ENCODE measurements at regions of chr10 and their contacts with region 1.

Region 1: DNA sequence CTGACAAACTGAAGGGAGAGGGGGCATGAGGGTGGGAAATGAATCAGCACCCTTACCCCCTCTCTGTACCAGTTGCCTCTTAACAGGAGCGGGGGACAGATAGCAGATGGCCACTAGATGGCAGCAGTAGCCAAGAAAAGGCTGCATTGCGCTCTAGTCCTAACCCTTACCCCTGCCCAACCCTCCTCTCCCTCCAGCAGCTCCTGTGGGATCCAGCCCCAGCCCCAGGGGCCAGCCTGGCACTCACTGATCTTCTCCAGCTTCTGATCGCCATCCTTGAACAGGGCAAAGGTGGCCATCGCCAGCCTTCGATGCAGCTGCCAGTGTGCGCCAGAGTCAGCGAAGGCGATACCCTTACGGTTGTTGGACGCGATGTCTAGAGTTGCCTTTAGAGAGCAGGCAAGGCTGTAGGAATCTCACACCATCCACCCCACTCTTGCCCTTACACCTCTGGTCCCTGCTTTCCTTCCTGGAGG is 2.2 kb downstream of the CYP17A1 start:
- DNase-seq: peak; percentile 64 to 88
- ATAC-seq: peak; percentile 86 to 99 (median 98)
- H3K4me3 ChIP-seq: no peak overlapping the region
- H3K4me3 Mint-ChIP-seq: no peak overlapping the region
- H3K27ac ChIP-seq: no peak overlapping the region
- H3K27ac Mint-ChIP-seq: no peak overlapping the region
- H3K4me1 ChIP-seq: peaks cover 6% of the 10 kb centered on the region
- H3K4me1 Mint-ChIP-seq: peaks cover 0 to 7% of the 10 kb centered on the region in 2 donors
- H3K27me3 ChIP-seq: peaks cover 5% of the 10 kb centered on the region
- H3K27me3 Mint-ChIP-seq: peaks cover 3 to 25% of the 10 kb centered on the region in 2 donors
- CTCF ChIP-seq: peak; percentile 86

Region 2: GRCh38 chr10:102853944-102854694 is 19.1 kb after region 1 on chr10 and contains the start of gene BORCS7:
- intact Hi-C with region 1: no loop called
- DNase-seq: peak; percentile 77 to 94
- ATAC-seq: peak; percentile 98 to 100 (median 99)
- H3K4me3 ChIP-seq: peak within 1 kb of the TSS; percentile 100
- H3K4me3 Mint-ChIP-seq: peak within 1 kb of the TSS; percentile 99
- H3K27ac ChIP-seq: peak within 1 kb of the TSS; percentile 98
- H3K27ac Mint-ChIP-seq: peak within 1 kb of the TSS; percentile 94 to 98
- H3K4me1 ChIP-seq: peaks cover 5% of the 10 kb centered on the region
- H3K4me1 Mint-ChIP-seq: peaks cover 16 to 19% of the 10 kb centered on the region in 2 donors
- H3K27me3 ChIP-seq: no peaks in the 10 kb centered on the region
- H3K27me3 Mint-ChIP-seq: no peaks in the 10 kb centered on the region
- CTCF ChIP-seq: no peak
- total RNA-seq, gene BORCS7: 9.7 to 18.9 (median 15.4) TPM

Region 3: DNA sequence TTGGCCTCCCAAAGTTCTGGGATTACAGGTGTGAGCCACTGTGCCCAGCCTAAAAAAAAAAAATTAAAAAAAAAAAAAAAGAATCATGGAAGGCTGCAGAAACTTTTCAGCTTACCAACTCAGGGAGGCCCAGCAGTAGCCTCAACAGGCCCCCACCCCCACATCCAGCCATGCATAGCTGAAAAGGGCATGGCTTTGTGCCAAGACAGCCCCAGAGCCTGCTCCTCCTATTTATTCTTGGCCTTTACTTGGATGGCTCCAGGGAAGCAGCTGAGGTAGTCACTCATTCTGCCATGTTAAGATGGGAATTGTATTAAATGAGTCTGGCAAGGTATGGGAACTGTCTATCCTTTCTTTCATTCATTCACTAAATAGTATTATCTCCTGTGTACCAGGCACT is 69.3 kb after region 1 on chr10:
- intact Hi-C with region 1: loop called (anchors 1 kb)
- DNase-seq: no peak
- ATAC-seq: no peak
- H3K4me3 ChIP-seq: no peak overlapping the region
- H3K4me3 Mint-ChIP-seq: no peak overlapping the region
- H3K27ac ChIP-seq: no peak overlapping the region
- H3K27ac Mint-ChIP-seq: no peak overlapping the region
- H3K4me1 ChIP-seq: no peaks in the 10 kb centered on the region
- H3K4me1 Mint-ChIP-seq: no peaks in the 10 kb centered on the region
- H3K27me3 ChIP-seq: no peaks in the 10 kb centered on the region
- H3K27me3 Mint-ChIP-seq: no peaks in the 10 kb centered on the region
- CTCF ChIP-seq: no peak

Region 4: DNA sequence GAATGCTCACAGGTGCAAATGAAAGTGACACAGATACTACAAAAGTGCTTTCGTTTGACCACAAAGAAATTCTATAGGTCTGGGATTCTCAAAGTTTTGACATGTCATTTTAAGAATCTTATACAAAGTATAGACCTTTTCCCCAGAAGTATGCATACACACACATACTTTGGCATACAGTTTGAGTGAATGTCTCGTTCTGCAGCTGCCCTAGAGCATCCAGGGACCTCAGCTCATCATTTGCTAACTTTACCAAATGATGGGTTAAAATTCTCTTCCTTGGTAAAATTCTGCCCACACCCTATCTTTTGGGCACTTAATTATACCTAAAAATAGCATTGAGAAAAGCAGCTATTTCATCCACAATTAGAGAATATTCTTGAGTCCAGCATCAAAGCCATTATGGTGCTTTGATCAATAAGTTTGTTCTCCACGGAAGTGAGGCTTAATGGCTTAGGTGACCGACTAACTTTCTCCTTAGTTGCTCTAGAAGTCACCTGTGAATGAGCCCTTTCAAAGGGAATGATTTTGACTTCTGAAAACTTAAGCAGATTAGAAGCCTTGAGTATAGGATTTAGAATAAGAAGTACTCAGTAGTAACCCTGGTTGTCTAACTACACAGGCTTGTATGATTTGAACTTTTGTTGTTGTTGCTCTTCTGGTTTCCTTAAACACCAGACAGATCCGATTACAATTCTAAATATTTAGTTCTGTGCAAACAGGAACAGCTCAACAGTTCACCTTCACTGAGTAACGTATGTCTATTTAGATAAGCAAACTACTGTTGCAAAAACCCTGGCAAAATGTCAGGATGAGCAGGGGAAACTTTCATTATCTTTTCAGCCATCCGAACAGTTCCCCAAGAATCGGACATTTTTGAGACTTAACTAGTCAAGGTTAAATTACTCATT is 153.6 kb after region 1 on chr10:
- intact Hi-C with region 1: no loop called
- DNase-seq: no peak
- ATAC-seq: no peak
- H3K4me3 ChIP-seq: no peak overlapping the region
- H3K4me3 Mint-ChIP-seq: no peak overlapping the region
- H3K27ac ChIP-seq: no peak overlapping the region
- H3K27ac Mint-ChIP-seq: no peak overlapping the region
- H3K4me1 ChIP-seq: no peaks in the 10 kb centered on the region
- H3K4me1 Mint-ChIP-seq: peaks cover 2% of the 10 kb centered on the region in 2 donors
- H3K27me3 ChIP-seq: no peaks in the 10 kb centered on the region
- H3K27me3 Mint-ChIP-seq: no peaks in the 10 kb centered on the region
- CTCF ChIP-seq: no peak

Region 5: GRCh38 chr10:103069453-103070331 is 234.6 kb after region 1 on chr10:
- intact Hi-C with region 1: loop called (anchors 1 kb)
- DNase-seq: peak; percentile 57 to 86
- ATAC-seq: peak; percentile 80 to 88 (median 83)
- H3K4me3 ChIP-seq: no peak overlapping the region
- H3K4me3 Mint-ChIP-seq: no peak overlapping the region
- H3K27ac ChIP-seq: peak overlapping the region; percentile 9
- H3K27ac Mint-ChIP-seq: peak overlapping the region; percentile 80 to 82
- H3K4me1 ChIP-seq: peaks cover 25% of the 10 kb centered on the region
- H3K4me1 Mint-ChIP-seq: peaks cover 30 to 32% of the 10 kb centered on the region in 2 donors
- H3K27me3 ChIP-seq: no peaks in the 10 kb centered on the region
- H3K27me3 Mint-ChIP-seq: no peaks in the 10 kb centered on the region
- CTCF ChIP-seq: peak; percentile 76

Region 6: GRCh38 chr10:103481974-103482531 is 647.0 kb after region 1 on chr10:
- intact Hi-C with region 1: loop called (anchors 10 kb)
- DNase-seq: peak in 1 of 2 donors; percentile 85
- ATAC-seq: peak; percentile 74 to 84 (median 81)
- H3K4me3 ChIP-seq: no peak overlapping the region
- H3K4me3 Mint-ChIP-seq: no peak overlapping the region
- H3K27ac ChIP-seq: no peak overlapping the region
- H3K27ac Mint-ChIP-seq: no peak overlapping the region
- H3K4me1 ChIP-seq: peaks cover 7% of the 10 kb centered on the region
- H3K4me1 Mint-ChIP-seq: peaks cover 7% of the 10 kb centered on the region in 2 donors
- H3K27me3 ChIP-seq: no peaks in the 10 kb centered on the region
- H3K27me3 Mint-ChIP-seq: no peaks in the 10 kb centered on the region
- CTCF ChIP-seq: peak; percentile 75

Measured in natural killer cell (primary cell).